ENCODE measurements at regions of chr12 and their contacts with region 1.

Region 1: DNA sequence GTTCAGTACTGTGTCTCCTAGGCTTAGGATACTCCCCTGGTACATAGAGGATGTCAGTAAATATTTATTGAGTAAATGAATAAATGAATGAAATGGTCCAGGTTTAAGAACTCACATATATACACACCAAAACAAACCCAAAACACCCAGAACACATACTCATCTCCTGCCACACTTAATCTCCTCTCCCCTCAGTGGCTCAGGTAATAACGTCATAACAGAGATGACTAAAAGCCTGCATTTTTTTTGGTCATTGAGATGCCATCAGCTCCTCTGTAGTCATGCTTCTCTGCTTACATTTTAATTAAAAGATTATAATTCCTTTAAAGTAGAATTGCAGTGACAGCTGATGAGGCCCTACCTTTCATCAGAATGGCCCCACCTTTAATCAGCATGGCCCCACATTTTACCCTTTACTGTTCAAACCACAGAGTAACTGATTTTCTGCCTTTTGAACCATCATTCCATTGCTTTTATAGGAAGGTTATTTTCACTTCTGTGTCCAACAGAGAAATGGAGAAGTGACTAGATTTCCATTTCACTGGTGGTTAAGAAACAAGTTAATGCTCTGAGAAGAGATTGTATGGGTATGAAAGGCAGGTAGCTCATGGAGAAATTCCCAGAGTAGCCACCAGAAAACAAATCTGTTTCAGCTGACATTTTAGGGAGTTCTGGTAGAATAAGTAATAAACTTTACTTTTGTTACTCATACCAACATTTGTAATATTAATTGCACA is 193.4 kb upstream of the ATP2B1 start:
- DNase-seq: no peak
- ATAC-seq: no peak

Region 2: GRCh38 chr12:89695100-89695499 is 207.0 kb before region 1 on chr12:
- intact Hi-C with region 1: no loop called
- DNase-seq: no peak
- ATAC-seq: no peak

Region 3: GRCh38 chr12:89949457-89950195 is 47.6 kb after region 1 on chr12:
- intact Hi-C with region 1: loop called (anchors 5 kb)
- DNase-seq: no peak
- ATAC-seq: peak; percentile 45

Region 4: DNA sequence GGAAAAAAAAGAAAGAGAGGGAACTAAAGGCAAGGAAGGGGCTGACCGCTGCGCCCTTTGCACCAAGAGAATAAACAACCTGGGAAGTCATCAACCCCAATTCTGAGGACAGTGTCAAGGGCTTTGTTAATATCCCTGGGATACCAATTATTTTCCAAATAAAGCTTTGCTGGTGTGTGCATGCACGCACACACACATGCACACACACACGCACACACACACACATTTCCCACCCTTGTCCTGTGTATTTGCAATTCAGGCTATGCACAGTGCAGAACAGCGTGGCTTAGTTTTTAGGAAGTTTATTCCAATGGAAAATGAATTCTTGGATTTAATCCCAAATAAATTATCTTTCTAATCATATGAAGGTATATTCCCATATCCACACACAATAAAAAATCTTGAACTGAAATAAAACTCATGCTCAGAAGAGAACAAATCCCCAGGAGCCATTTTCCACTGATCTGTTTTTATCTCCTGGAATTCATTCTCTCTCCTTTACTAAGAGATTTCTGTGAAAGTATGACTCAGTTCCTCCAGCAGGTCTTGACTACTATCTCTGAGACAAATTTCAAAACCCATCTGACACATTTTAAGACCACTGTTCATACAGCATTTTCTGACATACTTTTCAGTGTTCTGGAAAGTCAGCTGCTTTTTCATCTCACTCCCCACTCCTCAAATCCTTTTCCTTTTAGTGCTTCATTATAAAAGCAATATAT is 141.0 kb after region 1 on chr12:
- intact Hi-C with region 1: no loop called
- DNase-seq: no peak
- ATAC-seq: no peak

Measured in Right ventricle myocardium superior (tissue), 1 donor.